ENCODE measurements at regions of chr21 and their contacts with region 1.

Region 1: GRCh38 chr21:33479679-33480480 is at the start of gene TMEM50B:
- DNase-seq: peak; percentile 88 to 95
- H3K4me3 ChIP-seq: peak within 1 kb of the TSS; percentile 75 to 87 (median 77)
- H3K27ac ChIP-seq: peak within 1 kb of the TSS; percentile 43; the same call in 1 of the 2 replicates
- H3K4me1 ChIP-seq: 0 out of 7 replicates have a peak, but pooled peaks cover 0 to 6% (median 0%) of the 10 kb centered on the region in 4 experiments
- H3K27me3 ChIP-seq: no peaks in the 10 kb centered on the region
- CTCF ChIP-seq: peak; percentile 40 to 49 (median 41)
- EP300 ChIP-seq: peak in 1 of 2 experiments; percentile 4; a peak in 1 of 3 replicates
- POLR2A ChIP-seq: peak; percentile 65 to 82
- RAD21 ChIP-seq: peak; percentile 33 to 51
- total RNA-seq, gene TMEM50B: 16.8 and 17.8 TPM in 2 replicates

Region 2: GRCh38 chr21:33491373-33492102 is 11.7 kb after region 1 on chr21 and contains the start of gene DNAJC28:
- CTCF ChIA-PET with region 1: interaction called, 4 read pairs
- POLR2A ChIA-PET with region 1: interaction called, 30 read pairs
- DNase-seq: peak; percentile 87 to 98
- H3K4me3 ChIP-seq: peak within 1 kb of the TSS; percentile 66 to 98 (median 78)
- H3K27ac ChIP-seq: peak within 1 kb of the TSS; percentile 90
- H3K4me1 ChIP-seq: peaks cover 0 to 4% (median 0%) of the 10 kb centered on the region in 4 experiments; a peak in 1 of 7 replicates
- H3K27me3 ChIP-seq: no peaks in the 10 kb centered on the region
- CTCF ChIP-seq: no peak
- EP300 ChIP-seq: peak in 1 of 2 experiments; percentile 69; a peak in 1 of 3 replicates
- POLR2A ChIP-seq: peak in 1 of 2 experiments; percentile 66; a peak in 2 of 3 replicates
- RAD21 ChIP-seq: no peak
- total RNA-seq, gene DNAJC28: 4.2 and 4.3 TPM in 2 replicates

Region 3: DNA sequence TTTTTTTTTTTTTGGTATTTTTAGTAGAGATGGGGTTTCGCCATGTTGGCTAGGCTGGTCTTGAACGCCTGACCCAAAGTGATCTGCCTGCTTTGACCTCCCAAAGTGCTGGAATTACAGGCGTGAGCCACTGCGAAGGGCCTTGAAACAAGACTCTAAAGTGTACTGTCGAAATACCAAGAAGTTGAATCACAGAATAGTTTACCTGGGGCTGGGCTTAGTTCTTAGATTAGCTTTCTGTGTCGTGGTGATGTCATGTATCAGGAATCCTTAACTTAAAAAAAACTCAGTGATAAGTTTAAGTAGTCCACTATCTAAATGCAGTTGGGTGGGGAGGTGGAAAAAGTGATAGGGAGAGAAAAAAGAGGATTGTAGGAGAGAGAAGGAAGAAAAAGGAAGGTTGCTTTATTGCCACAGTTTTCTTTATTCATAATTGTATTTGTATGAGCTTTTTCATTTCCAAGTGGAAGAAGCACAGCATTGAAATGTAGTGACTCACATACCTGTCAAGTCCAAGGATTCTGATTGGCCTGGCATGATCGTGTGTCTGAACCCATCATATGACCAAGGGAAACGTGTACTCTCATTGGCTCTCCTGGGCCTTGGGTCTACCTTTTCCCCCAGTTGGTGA is 175.8 kb after region 1 on chr21:
- CTCF ChIA-PET with region 1: no interaction called
- POLR2A ChIA-PET with region 1: no interaction called
- DNase-seq: no peak
- H3K4me3 ChIP-seq: no peak overlapping the region
- H3K27ac ChIP-seq: no peak overlapping the region
- H3K4me1 ChIP-seq: peaks cover 4 to 15% (median 9%) of the 10 kb centered on the region in 4 experiments; a peak in 6 of 7 replicates
- H3K27me3 ChIP-seq: no peaks in the 10 kb centered on the region
- CTCF ChIP-seq: no peak
- EP300 ChIP-seq: no peak
- POLR2A ChIP-seq: no peak
- RAD21 ChIP-seq: no peak

Measured in H1 (cell line).